Activated CD4-positive, alpha-beta T cell treated with anti-CD3 and anti-CD28 coated beads, Interleukin-2, amount 10 ng/mL, durations not matched to agents 24 days and 14 days (primary cell): ENCODE measurements at regions of chr9 and their contacts with region 1.

Region 1: DNA sequence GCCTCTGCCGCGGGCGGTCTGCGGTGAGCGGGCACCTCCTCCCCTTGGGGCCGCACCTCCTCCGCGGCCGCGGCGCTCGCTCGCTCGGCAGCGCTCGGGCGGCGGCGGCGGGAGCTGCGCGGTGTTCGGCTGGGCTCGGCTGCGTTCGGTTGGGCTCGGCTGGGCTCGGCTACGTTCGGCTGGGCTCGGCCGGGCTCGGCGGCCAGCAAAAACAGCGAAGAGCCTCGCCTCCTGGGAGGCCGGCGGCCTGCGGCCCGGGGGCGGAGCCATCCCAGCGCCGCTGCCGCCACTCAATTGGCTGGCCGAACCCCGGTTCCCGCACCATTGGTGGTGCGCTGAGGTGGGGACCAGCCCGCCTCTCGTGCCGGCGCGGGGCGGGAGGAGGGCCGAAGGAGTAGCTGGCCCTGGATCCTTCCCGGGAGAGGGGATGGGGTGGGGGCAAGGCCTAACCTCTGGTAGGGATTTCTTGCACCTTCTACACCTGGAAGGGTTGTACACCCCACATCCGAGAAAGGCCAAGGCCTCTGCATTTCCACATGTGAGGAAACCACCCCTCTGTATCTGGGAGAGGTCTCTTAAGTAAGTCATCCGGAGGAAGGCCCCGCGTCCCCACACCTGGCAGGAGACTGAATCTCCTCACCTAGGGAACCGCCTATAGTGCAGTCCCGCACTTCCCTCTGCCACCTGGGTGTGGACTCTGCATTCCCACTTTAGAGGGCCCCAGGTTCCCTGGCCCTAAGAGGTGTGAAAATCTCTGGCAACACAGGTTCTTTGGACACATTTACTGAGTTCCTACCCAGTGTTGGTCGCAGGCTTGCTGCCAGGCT is at the start of gene ENHO:
- DNase-seq: peak; percentile 98
- H3K4me3 Mint-ChIP-seq: peak within 1 kb of the TSS; percentile 66
- H3K27ac Mint-ChIP-seq: peak within 1 kb of the TSS; percentile 0
- H3K4me1 Mint-ChIP-seq: peaks cover 11% of the 10 kb centered on the region
- H3K27me3 Mint-ChIP-seq: peaks cover 46% of the 10 kb centered on the region
- total RNA-seq, gene ENHO: not detected in 2 replicates

Region 2: DNA sequence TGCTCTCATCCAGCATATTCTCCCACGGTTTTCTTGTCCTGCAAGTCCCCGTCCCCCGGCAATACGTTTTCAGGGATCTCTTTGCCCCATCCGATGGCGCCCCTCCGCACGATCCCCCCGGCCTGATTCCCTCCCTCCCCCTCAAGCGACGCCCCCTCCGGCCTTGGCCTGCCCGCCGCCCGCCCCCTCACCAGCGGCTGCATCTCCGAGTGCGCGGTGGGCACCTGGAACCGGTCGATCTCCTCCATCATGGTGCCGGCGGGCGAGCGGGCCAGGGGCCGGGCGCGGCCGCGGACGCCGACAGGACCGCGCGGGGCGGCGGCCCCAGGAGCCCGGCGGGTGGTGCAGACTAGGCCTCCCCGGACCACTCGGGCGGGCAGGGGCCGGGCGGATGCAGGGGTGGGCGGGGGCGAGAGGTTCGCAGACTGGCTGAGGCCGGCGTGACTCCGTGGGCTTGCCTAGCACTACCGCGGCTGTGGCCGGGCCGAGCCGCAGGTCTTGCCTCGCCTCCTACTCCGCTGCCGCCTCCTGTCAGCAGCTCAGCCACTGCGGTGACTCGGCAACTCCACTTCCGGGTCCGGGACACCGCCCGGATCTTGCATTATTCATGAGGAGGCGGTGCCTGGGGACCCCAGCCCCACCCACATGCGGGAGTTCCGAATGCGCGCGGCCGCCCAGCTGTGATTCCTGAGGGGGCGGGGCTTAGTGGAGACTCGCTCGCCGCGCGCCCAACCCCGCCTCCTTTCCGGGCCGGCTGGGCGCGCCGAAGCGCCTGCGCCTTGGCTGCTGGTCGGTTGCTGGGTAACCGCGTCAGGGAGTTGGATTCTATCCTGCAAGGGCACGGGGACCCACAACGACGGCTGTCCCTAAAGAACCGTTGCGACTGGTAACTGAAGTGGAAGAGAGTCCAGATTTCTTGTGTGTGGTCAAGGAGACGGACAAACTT is 64.9 kb before region 1 on chr9 and contains the starts of genes DNAI1 and FAM219A:
- intact Hi-C with region 1: loop called (anchors 1 kb)
- DNase-seq: peak; percentile 100
- H3K4me3 Mint-ChIP-seq: peak within 1 kb of the TSS; percentile 92
- H3K27ac Mint-ChIP-seq: peak within 1 kb of the TSS; percentile 81
- H3K4me1 Mint-ChIP-seq: peaks cover 41% of the 10 kb centered on the region
- H3K27me3 Mint-ChIP-seq: peaks cover 18% of the 10 kb centered on the region
- total RNA-seq, gene DNAI1: not detected in 2 replicates
- total RNA-seq, gene FAM219A: 13.6 and 16.3 TPM in 2 replicates